A673 (cell line): ENCODE measurements at regions of chr18 and their contacts with region 1.

Region 1: GRCh38 chr18:9643549-9643948 is 29.2 kb upstream of the PPP4R1 start:
- DNase-seq: peak; percentile 91
- H3K4me3 ChIP-seq: no peak overlapping the region
- H3K27ac ChIP-seq: no peak overlapping the region
- H3K4me1 ChIP-seq: peaks cover 18% of the 10 kb centered on the region
- H3K27me3 ChIP-seq: no peaks in the 10 kb centered on the region
- CTCF ChIP-seq: no peak

Region 2: DNA sequence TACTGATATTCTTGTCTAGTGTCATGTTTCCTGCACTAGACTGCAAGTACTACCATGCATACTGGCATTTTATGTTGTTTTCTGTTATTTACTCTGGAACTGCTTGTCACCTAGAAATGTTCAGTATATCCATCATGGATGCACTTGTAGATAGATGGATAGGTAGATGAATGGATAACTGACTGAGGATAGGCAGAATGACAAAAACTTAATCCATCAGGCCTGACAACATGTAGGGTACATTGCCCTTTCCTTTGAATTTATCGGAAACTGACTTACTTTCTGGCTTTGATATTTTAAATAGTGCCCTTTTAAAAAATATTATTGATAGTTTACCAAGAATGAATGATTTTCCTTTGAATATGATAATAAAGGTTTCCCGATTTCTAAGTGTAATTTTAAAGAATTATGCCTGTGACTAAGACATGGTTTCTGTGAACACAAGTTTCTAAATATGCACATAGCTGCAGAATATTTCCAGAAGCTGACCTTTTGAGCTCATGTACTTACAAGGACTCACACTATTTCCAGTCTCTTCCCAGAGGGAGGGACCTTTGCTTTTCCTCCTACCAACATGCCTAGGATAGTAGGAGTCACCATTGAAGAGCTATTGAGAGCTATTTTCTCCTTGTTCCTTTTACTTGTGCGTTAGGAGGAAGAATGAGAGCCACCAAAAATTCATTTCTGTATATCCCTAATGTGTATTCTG is 425.7 kb before region 1 on chr18:
- CTCF ChIA-PET with region 1: no interaction called
- POLR2A ChIA-PET with region 1: no interaction called
- intact Hi-C with region 1: no loop called
- DNase-seq: no peak
- H3K4me3 ChIP-seq: no peak overlapping the region
- H3K27ac ChIP-seq: no peak overlapping the region
- H3K4me1 ChIP-seq: peaks cover 17% of the 10 kb centered on the region
- H3K27me3 ChIP-seq: no peaks in the 10 kb centered on the region
- CTCF ChIP-seq: no peak

Region 3: GRCh38 chr18:9417073-9417841 is 226.3 kb before region 1 on chr18:
- CTCF ChIA-PET with region 1: no interaction called
- POLR2A ChIA-PET with region 1: no interaction called
- intact Hi-C with region 1: no loop called
- DNase-seq: peak; percentile 26
- H3K4me3 ChIP-seq: no peak overlapping the region
- H3K27ac ChIP-seq: no peak overlapping the region
- H3K4me1 ChIP-seq: no peaks in the 10 kb centered on the region
- H3K27me3 ChIP-seq: no peaks in the 10 kb centered on the region
- CTCF ChIP-seq: no peak

Region 4: DNA sequence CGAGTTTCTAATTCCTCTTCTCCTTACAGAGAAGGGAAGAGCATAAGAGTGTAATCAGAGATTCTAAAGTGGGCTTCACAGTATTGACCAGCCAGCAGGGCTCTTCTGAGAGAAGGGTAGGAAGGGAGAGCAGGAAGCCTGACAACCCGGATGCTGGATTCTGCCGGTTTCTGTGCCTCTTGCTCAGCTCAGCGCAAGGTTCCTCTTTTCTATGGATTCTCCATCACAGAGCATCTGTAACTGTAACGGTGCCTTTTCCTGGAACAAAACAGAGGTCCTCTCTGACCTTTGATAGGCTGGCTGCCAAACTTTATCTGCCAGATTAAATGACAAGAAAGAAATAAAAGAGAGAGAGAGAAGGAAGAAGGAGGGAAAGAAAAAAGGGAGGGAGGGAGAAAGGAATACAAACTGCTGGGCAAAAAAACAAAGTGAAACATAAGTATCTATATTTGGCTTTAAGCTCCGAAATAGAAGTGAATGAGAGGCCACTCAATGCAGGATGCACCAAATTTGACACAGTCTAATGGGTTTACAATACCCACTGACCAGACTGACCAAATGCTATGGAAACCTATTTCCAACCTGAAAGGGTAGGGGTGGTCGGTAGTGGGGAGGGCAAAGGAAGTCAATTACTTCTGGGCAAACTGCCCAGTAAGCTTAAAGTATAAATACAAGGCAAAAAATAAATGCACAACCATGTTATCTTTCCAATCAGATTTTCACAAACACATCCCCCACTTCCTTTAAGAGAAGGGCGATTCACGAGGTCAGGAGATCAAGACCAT is 1446.6 kb after region 1 on chr18:
- CTCF ChIA-PET with region 1: no interaction called
- POLR2A ChIA-PET with region 1: interaction called, 11 read pairs
- intact Hi-C with region 1: no loop called
- DNase-seq: no peak
- H3K4me3 ChIP-seq: no peak overlapping the region
- H3K27ac ChIP-seq: no peak overlapping the region
- H3K4me1 ChIP-seq: no peaks in the 10 kb centered on the region
- H3K27me3 ChIP-seq: peaks cover 23% of the 10 kb centered on the region
- CTCF ChIP-seq: no peak